Heart right ventricle (tissue), 16 donors: ENCODE measurements at regions of chr4 and their contacts with region 1.

Region 1: DNA sequence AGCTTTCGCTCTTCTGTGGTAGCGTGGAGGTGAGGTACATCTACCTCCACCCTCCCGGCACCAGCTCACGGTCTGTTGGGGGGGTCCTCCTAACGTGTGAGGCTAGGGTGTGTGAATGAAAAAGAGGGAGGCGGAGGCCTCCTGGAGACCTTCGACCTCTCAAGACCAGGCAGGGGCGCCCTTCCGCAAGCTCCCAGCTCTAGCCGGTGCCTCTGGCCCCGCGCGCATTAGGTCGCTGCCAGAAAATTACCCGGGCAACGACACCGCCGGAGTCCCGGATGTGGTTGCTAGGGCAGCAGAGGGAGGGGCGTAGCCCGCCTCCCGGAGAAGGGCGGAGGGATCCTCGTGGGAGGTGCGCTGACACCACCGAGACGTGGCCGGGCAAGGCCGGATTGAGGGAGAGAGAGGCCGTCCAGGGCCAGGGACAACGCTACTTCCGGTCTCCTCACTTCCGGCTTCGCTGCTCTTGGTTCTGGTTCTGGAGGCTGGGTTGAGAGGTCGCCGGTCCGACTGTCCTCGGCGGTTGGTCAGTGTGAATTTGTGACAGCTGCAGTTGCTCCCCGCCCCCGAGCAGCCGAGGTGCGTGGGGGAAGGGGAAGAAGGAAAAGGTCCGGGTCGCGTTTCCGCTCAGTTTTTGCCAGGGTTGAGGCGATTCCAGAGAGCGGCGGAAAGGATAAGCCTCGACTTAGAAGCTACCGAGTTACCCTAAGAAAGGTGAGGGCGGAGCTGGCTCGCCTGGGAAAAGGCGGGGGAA is at the starts of genes ARFIP1 and TIGD4:
- DNase-seq: peak; percentile 97
- ATAC-seq: peak; percentile 99 to 100 (median 99)
- H3K4me3 ChIP-seq: peak within 1 kb of the TSS; percentile 51 to 95 (median 78)
- H3K27ac ChIP-seq: peak within 1 kb of the TSS; percentile 42 to 95 (median 88)
- H3K4me1 ChIP-seq: peaks cover 0 to 45% (median 23%) of the 10 kb centered on the region in 9 donors
- H3K27me3 ChIP-seq: no peaks in the 10 kb centered on the region
- CTCF ChIP-seq: peak in 6 of 9 donors; percentile 8 to 53 (median 42)
- total RNA-seq, gene ARFIP1: 11.3 to 18.7 (median 14.9) TPM
- total RNA-seq, gene TIGD4: 0.12 to 0.44 (median 0.20) TPM

Region 2: GRCh38 chr4:152535903-152536544 is 243.7 kb before region 1 on chr4 and contains the start of gene FBXW7:
- intact Hi-C with region 1: loop called in 2 of 10 experiments (anchors 1 to 10 kb)
- DNase-seq: peak; percentile 99
- ATAC-seq: peak; percentile 95 to 99 (median 98)
- H3K4me3 ChIP-seq: peak within 1 kb of the TSS; percentile 89 to 100 (median 98)
- H3K27ac ChIP-seq: peak within 1 kb of the TSS; percentile 42 to 98 (median 92)
- H3K4me1 ChIP-seq: peaks cover 0 to 63% (median 53%) of the 10 kb centered on the region in 9 donors
- H3K27me3 ChIP-seq: no peaks in the 10 kb centered on the region
- CTCF ChIP-seq: no peak
- total RNA-seq, gene FBXW7: 59.5 to 87.6 (median 71.7) TPM

Region 3: GRCh38 chr4:152735396-152735859 is 44.3 kb before region 1 on chr4:
- intact Hi-C with region 1: no loop called
- DNase-seq: no peak
- ATAC-seq: peak in 1 of 8 donors; percentile 43
- H3K4me3 ChIP-seq: no peak overlapping the region
- H3K27ac ChIP-seq: no peak overlapping the region
- H3K4me1 ChIP-seq: no peaks in the 10 kb centered on the region
- H3K27me3 ChIP-seq: no peaks in the 10 kb centered on the region
- CTCF ChIP-seq: peak in 8 of 9 donors; percentile 45 to 79 (median 68)

Region 4: DNA sequence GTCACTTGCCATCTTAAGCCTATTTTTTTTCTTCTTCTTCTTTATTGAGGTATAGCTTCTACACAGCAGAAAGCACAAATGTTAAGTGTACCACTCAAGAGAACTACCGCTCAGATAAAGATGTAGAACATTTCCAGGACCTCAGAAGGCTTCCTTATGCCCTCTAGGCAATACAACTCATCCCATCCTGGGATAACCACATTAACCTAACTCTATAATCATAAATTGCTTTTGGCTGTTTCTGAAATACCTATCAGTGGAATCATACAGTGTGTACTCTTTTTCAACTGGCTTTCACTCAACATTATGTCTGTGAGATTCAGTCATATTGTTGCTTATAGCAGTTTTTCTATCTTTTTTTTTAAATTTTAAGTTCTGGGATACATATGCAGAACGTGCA is 51.7 kb after region 1 on chr4:
- intact Hi-C with region 1: no loop called
- DNase-seq: no peak
- ATAC-seq: no peak
- H3K4me3 ChIP-seq: no peak overlapping the region
- H3K27ac ChIP-seq: no peak overlapping the region
- H3K4me1 ChIP-seq: peaks cover 0 to 6% (median 0%) of the 10 kb centered on the region in 9 donors
- H3K27me3 ChIP-seq: no peaks in the 10 kb centered on the region
- CTCF ChIP-seq: no peak

Region 5: GRCh38 chr4:153045111-153045982 is 265.7 kb after region 1 on chr4:
- intact Hi-C with region 1: no loop called
- DNase-seq: no peak
- ATAC-seq: no peak
- H3K4me3 ChIP-seq: no peak overlapping the region
- H3K27ac ChIP-seq: no peak overlapping the region
- H3K4me1 ChIP-seq: no peaks in the 10 kb centered on the region
- H3K27me3 ChIP-seq: peaks cover 0 to 5% (median 0%) of the 10 kb centered on the region in 7 donors
- CTCF ChIP-seq: no peak

Region 6: DNA sequence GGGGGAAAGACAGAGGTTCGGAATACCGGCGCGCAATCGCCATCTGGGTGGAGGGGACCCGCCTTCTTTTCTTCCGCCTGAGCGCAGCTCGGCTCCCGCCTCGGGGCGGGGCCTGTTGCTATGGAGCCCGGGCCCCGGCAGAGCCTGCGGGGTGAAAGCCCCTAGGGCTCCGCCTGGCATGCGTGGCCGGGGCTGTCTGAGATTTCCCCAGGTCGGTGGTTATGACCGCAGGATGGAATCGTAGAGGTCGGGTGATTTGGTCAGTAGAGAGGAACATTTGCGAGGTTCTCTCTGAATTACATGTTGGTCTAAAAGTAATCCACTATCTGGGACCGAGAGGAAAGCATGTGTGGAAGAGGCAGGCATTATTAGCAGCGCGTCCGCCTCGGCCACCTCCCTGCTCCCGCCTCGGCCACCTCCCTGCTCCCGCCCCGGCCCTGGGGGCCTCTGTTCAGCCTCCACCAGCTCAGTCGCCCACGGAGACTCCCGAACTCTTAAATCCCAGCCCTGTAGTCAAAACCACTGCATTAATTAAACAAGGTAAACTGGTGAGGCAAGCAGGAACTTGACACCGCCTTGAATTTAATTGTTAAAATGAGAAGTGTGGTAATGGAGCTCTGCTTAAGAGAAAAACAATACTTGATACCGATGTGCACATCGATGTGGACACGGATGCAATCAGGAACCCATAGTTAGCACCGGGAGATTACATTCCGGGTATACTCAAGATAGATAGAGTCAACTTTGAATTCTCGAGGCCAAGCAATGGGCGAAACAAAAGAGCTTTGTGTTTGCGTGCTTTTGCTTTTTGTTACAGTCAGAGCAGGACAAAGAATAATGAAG is 469.7 kb after region 1 on chr4:
- intact Hi-C with region 1: loop called in 1 of 10 experiments (anchors 10 kb)
- DNase-seq: peak; percentile 72 to 81
- ATAC-seq: peak; percentile 93 to 99 (median 96)
- H3K4me3 ChIP-seq: peak overlapping the region; percentile 36 to 70 (median 60)
- H3K27ac ChIP-seq: peak overlapping the region in 9 of 10 donors; percentile 24 to 79 (median 66)
- H3K4me1 ChIP-seq: peaks cover 0 to 25% (median 19%) of the 10 kb centered on the region in 9 donors
- H3K27me3 ChIP-seq: no peaks in the 10 kb centered on the region
- CTCF ChIP-seq: no peak